Activated T-helper 2 cell treated with anti-CD3 and anti-CD28 coated beads, Interferon-gamma antibody, Interleukin-2, Interleukin-4, amounts not matched to agents 10 μg/mL and 5 μg/mL and 100 μg/mL, durations not matched to agents 14 hours and 24 hours and 36 hours (primary cell): ENCODE measurements at regions of chr10 and their contacts with region 1.

Region 1: GRCh38 chr10:63707254-63707910 is 186.2 kb downstream of the REEP3 start:
- DNase-seq: no peak
- H3K4me3 Mint-ChIP-seq: no peak overlapping the region
- H3K27ac Mint-ChIP-seq: peak overlapping the region; percentile 37
- H3K4me1 Mint-ChIP-seq: peaks cover 26% of the 10 kb centered on the region
- H3K27me3 Mint-ChIP-seq: peaks cover 2% of the 10 kb centered on the region

Region 2: DNA sequence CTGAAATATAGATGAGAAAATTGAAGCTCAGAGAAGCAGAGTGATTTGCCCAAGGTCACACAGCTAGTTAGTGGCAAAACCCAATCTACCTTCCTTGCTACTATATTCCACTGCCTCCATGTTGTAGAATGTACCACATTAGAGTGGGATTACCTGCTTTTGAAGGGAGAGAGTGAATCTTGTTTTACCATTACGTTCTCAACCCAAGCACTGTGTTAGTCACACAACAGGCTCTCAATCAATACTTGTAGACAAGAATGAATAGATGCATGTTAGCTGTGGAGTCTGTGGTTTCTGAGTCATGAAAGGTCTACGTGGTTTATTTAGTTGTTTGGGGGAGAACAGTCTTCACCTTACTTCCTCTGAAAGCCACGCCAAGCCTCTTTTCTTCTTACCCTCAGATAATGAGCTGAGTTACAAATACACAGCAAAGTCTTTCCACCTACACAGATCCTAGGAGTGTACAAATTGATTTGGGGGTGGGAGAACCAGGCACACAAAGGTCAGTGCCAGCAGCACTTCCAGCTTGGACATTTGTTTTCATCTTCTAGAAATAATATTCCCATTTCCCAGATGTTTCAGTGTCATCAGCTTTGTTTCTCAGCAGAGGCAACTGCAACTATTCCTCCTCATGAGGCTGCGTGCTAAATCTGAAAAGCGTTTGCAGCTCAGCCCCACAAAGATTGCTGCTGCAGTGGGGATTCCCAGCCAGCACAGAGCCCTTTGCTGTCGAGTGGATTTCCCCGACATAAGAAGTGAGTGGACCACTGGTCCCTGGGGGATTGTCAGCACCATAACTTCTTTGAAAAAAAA is 974.3 kb before region 1 on chr10:
- intact Hi-C with region 1: loop called (anchors 1 kb)
- DNase-seq: peak; percentile 51
- H3K4me3 Mint-ChIP-seq: peak overlapping the region; percentile 56
- H3K27ac Mint-ChIP-seq: no peak overlapping the region
- H3K4me1 Mint-ChIP-seq: peaks cover 23% of the 10 kb centered on the region
- H3K27me3 Mint-ChIP-seq: no peaks in the 10 kb centered on the region

Region 3: GRCh38 chr10:63227207-63227915 is 480.0 kb before region 1 on chr10:
- intact Hi-C with region 1: loop called (anchors 2 kb)
- DNase-seq: no peak
- H3K4me3 Mint-ChIP-seq: peak overlapping the region; percentile 41
- H3K27ac Mint-ChIP-seq: peak overlapping the region; percentile 74
- H3K4me1 Mint-ChIP-seq: peaks cover 34% of the 10 kb centered on the region
- H3K27me3 Mint-ChIP-seq: no peaks in the 10 kb centered on the region

Region 4: GRCh38 chr10:63521416-63522276 is 185.7 kb before region 1 on chr10:
- intact Hi-C with region 1: loop called (anchors 2 kb)
- DNase-seq: peak; percentile 42
- H3K4me3 Mint-ChIP-seq: peak overlapping the region; percentile 79
- H3K27ac Mint-ChIP-seq: peak overlapping the region; percentile 81
- H3K4me1 Mint-ChIP-seq: peaks cover 51% of the 10 kb centered on the region
- H3K27me3 Mint-ChIP-seq: no peaks in the 10 kb centered on the region

Region 5: DNA sequence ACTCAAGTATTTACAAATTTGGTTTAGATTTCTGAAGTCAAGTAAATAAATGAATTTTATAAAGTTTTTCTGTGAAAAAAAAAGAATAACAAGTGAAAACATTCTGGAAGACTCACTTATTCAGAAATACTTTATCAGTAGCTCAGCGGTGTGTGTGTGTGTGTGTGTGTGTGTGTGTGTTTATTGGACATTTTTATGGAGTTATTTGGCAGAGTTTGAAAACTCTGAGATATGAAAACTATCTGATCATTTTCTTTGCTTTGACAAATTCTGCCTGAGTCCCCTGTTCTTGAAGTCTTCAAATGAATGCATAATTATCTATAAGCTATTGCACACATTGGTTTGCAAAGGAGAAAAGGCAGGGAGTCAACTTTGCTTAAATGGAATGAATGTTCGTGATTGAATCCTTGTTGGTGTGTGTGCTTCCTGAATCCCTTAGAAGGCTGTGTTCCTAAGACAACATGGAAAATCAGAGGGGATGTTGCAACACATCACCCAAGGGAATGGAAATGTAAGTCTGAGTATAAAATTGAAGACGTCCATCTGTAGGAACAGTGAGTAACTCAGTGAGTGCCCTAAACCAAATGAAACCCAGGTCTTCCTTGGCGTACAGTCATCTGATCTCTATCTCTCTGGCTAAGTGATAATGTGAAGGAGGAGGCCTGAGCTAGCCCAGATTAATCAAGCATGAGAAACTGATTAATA is 25.2 kb before region 1 on chr10:
- intact Hi-C with region 1: loop called (anchors 2 kb)
- DNase-seq: no peak
- H3K4me3 Mint-ChIP-seq: no peak overlapping the region
- H3K27ac Mint-ChIP-seq: no peak overlapping the region
- H3K4me1 Mint-ChIP-seq: peaks cover 17% of the 10 kb centered on the region
- H3K27me3 Mint-ChIP-seq: peaks cover 21% of the 10 kb centered on the region